ENCODE measurements at regions of chr20 and their contacts with region 1.

Region 1: GRCh38 chr20:23663180-23663579 is 25.4 kb upstream of the CST3 start:
- DNase-seq: no peak
- ATAC-seq: no peak
- H3K4me3 ChIP-seq: no peak overlapping the region
- H3K27ac ChIP-seq: peak overlapping the region; percentile 93
- H3K4me1 ChIP-seq: peaks cover 69% of the 10 kb centered on the region
- H3K27me3 ChIP-seq: no peaks in the 10 kb centered on the region
- CTCF ChIP-seq: no peak
- EP300 ChIP-seq: no peak
- POLR2A ChIP-seq: no peak
- RAD21 ChIP-seq: no peak

Region 2: GRCh38 chr20:23435626-23436539 is 227.3 kb before region 1 on chr20:
- CTCF ChIA-PET with region 1: no interaction called
- POLR2A ChIA-PET with region 1: interaction called, 17 read pairs
- in situ Hi-C with region 1: no loop called
- intact Hi-C with region 1: no loop called
- DNase-seq: peak; percentile 86
- ATAC-seq: peak; percentile 93
- H3K4me3 ChIP-seq: peak overlapping the region; percentile 38 to 67 (median 47)
- H3K27ac ChIP-seq: peak overlapping the region; percentile 50
- H3K4me1 ChIP-seq: peaks cover 41% of the 10 kb centered on the region
- H3K27me3 ChIP-seq: no peaks in the 10 kb centered on the region; a peak in 1 of 5 replicates
- CTCF ChIP-seq: no peak; the same call in 1 of the 2 replicates
- EP300 ChIP-seq: no peak
- POLR2A ChIP-seq: 0 out of 4 replicates have a peak, but pooled peaks of 1 of the 2 experiments have one; percentile 43
- RAD21 ChIP-seq: no peak

Measured in HepG2 (cell line).